Cardiac septum (tissue), 1 donor: ENCODE measurements at regions of chr7 and their contacts with region 1.

Region 1: GRCh38 chr7:114085592-114086501 is 167.0 kb upstream of the PPP1R3A start:
- DNase-seq: no peak

Region 2: DNA sequence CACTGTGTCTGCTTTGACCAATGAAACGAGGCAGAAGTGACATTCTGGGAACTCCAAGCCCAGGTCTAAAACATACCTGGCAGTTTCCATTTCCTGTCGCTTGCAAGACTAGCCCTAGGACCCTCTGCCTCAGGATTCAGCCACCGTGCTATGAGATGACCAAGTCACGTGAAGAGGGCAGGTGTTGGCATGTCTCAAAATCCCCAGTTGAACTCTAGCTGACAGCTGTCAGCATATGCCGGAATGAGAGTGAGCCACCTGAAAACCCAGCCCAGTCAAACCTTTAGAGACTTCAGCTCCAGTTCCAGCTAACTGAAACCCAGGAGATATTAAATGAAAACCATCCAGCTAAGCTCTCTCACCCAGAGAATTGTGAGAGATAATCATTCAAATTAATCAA is 77.2 kb before region 1 on chr7:
- intact Hi-C with region 1: no loop called
- DNase-seq: no peak

Region 3: GRCh38 chr7:114414156-114415063 is 328.6 kb after region 1 on chr7 and contains the start of gene FOXP2:
- intact Hi-C with region 1: loop called (anchors 10 kb)
- DNase-seq: no peak
- total RNA-seq, gene FOXP2: 1.9 TPM

Region 4: GRCh38 chr7:114539575-114539974 is 453.7 kb after region 1 on chr7:
- intact Hi-C with region 1: loop called (anchors 10 kb)
- DNase-seq: no peak

Region 5: DNA sequence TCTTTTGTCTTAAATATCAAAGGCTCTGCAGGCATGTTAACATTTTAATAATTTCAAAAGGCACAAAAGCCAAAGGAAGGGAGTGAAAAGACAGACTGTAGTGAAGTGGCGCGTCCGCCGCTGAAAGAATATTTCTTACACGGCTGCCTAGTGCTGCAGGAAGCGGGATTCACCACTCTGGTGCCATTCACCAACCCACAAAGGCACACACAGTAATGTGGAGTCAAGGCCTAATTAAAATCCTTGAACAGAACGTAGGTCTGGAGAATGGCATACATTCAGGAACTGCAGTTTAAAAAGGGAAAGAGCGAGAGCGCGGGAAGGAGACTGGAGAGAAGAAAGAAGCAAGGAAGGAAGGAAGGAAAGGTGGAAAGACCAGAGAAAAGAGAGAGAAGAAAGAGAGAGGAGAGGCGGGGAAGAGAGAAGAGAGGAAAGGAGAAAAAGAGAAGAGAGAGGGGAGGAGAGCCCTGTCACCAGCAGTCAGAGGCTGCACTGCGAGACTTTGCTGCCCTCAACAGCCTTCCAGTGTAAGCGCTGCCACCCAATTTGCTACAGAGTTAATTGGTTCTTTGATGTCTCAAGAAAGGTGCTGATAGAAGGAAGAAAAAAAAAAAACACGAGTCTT is 1390.0 kb after region 1 on chr7:
- intact Hi-C with region 1: loop called (anchors 10 kb)
- DNase-seq: no peak